Activated CD8-positive, alpha-beta T cell treated with anti-CD3 and anti-CD28 coated beads for 36 hours (primary cell): ENCODE measurements at regions of chr16 and their contacts with region 1.

Region 1: GRCh38 chr16:720990-721764 is at the start of gene ANTKMT:
- DNase-seq: peak; percentile 85
- ATAC-seq: peak; percentile 67
- H3K4me3 Mint-ChIP-seq: peak within 1 kb of the TSS; percentile 78
- H3K27ac Mint-ChIP-seq: peak within 1 kb of the TSS; percentile 78
- H3K4me1 Mint-ChIP-seq: peaks cover 26% of the 10 kb centered on the region
- H3K27me3 Mint-ChIP-seq: no peaks in the 10 kb centered on the region
- CTCF ChIP-seq: no peak
- total RNA-seq, gene ANTKMT: 34.3 to 38.4 TPM

Region 2: GRCh38 chr16:695355-696089 is 25.7 kb before region 1 on chr16:
- CTCF ChIA-PET with region 1: interaction called, 4 read pairs
- POLR2A ChIA-PET with region 1: interaction called, 11 read pairs
- intact Hi-C with region 1: no loop called
- DNase-seq: peak; percentile 79
- ATAC-seq: peak; percentile 82
- H3K4me3 Mint-ChIP-seq: peak overlapping the region; percentile 78
- H3K27ac Mint-ChIP-seq: peak overlapping the region; percentile 75
- H3K4me1 Mint-ChIP-seq: peaks cover 20% of the 10 kb centered on the region
- H3K27me3 Mint-ChIP-seq: peaks cover 4% of the 10 kb centered on the region
- CTCF ChIP-seq: no peak

Region 3: GRCh38 chr16:733382-734207 is 12.4 kb after region 1 on chr16:
- CTCF ChIA-PET with region 1: interaction called, 207 read pairs
- POLR2A ChIA-PET with region 1: interaction called, 84 read pairs
- intact Hi-C with region 1: no loop called
- DNase-seq: peak; percentile 61
- ATAC-seq: no peak
- H3K4me3 Mint-ChIP-seq: no peak overlapping the region
- H3K27ac Mint-ChIP-seq: no peak overlapping the region
- H3K4me1 Mint-ChIP-seq: peaks cover 21% of the 10 kb centered on the region
- H3K27me3 Mint-ChIP-seq: no peaks in the 10 kb centered on the region
- CTCF ChIP-seq: peak; percentile 78

Region 4: DNA sequence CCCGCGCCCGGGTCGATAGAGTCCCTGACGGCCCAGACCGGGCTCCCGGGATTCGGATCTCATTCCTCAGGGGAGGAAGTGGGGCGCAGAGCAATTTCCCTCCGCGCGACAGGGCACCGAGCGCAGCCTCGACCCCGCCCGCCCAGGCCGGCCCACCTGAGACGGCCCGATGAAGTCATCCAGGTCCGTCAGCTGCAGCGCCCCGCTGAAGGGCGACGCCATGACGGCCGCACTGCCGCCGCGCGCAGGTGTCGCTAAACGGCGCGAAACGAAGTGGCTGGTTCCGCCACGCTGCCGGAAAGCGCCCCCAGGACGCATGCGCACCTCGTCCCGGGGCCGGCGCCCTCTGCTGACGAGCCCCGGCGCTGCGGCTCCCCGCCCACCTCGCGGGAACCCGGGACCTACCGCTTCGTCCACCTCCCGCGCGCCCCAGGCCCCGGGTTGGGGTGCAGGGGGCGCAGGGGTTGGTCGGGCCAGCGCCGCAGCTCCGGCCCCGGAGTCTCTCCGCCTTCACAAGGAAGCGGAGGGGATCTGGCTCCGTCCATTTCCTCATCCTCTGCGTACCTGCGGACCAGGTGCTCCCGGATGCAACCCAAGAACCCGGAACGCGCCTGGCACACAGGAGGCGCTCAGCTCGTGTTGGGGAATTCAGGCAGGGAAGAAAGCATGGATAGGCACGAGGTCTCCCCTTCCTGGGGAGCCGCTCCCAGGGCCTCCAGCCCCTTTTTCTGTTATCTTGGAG is 19.8 kb after region 1 on chr16 and contains the start of gene CIAO3:
- CTCF ChIA-PET with region 1: interaction called, 207 read pairs
- POLR2A ChIA-PET with region 1: interaction called, 84 read pairs
- intact Hi-C with region 1: no loop called
- DNase-seq: peak; percentile 92
- ATAC-seq: peak; percentile 85
- H3K4me3 Mint-ChIP-seq: peak within 1 kb of the TSS; percentile 80
- H3K27ac Mint-ChIP-seq: peak within 1 kb of the TSS; percentile 63
- H3K4me1 Mint-ChIP-seq: peaks cover 20% of the 10 kb centered on the region
- H3K27me3 Mint-ChIP-seq: no peaks in the 10 kb centered on the region
- CTCF ChIP-seq: peak; percentile 88
- total RNA-seq, gene CIAO3: 21.3 to 25.0 TPM